Activated naive CD4-positive, alpha-beta T cell treated with anti-CD3 and anti-CD28 coated beads, Interleukin-2, amount 10 ng/mL, durations not matched to agents 7 days and 5 days (primary cell): ENCODE measurements at regions of chr1 and their contacts with region 1.

Region 1: GRCh38 chr1:151837208-151837596 is 2.4 kb downstream of the C2CD4D start:
- DNase-seq: peak; percentile 39
- H3K4me3 Mint-ChIP-seq: peak overlapping the region; percentile 72
- H3K27ac Mint-ChIP-seq: peak overlapping the region; percentile 90
- H3K4me1 Mint-ChIP-seq: peaks cover 70% of the 10 kb centered on the region
- H3K27me3 Mint-ChIP-seq: peaks cover 38% of the 10 kb centered on the region

Region 2: GRCh38 chr1:151534665-151535278 is 302.4 kb before region 1 on chr1:
- CTCF ChIA-PET with region 1: interaction called, 12 read pairs
- DNase-seq: peak; percentile 85
- H3K4me3 Mint-ChIP-seq: no peak overlapping the region
- H3K27ac Mint-ChIP-seq: no peak overlapping the region
- H3K4me1 Mint-ChIP-seq: peaks cover 5% of the 10 kb centered on the region
- H3K27me3 Mint-ChIP-seq: peaks cover 16% of the 10 kb centered on the region

Region 3: GRCh38 chr1:151594143-151594625 is 243.0 kb before region 1 on chr1:
- CTCF ChIA-PET with region 1: interaction called, 14 read pairs
- DNase-seq: peak; percentile 92
- H3K4me3 Mint-ChIP-seq: peak overlapping the region; percentile 22
- H3K27ac Mint-ChIP-seq: no peak overlapping the region
- H3K4me1 Mint-ChIP-seq: peaks cover 11% of the 10 kb centered on the region
- H3K27me3 Mint-ChIP-seq: peaks cover 12% of the 10 kb centered on the region

Region 4: DNA sequence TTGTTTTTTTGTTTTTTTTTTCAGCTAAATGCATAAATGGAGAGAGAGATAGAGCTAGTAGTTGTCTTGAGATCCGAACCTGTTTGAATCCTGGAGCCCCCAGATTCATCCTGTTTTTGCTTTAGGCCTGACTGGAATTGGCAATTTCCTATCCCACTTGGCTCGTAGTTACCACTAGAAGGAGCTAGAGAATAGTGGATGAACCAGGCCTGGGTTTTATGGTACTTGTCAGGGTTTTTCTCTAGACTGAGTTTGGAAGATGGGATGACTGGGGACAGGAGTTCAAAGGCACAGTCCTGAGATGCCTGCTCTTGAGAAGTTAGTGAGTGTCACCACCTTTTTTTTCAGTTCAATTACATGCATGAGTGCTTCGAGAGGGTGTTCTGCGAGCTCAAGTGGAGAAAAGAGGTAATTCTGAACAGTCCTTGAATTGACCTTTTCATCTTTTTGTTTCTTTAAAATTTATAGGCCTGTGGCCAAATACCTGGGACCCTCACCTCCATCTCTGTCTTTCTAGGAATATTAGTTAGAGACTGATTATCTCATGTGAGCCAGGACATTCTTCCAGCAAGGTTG is 144.0 kb before region 1 on chr1:
- CTCF ChIA-PET with region 1: interaction called, 10 read pairs
- DNase-seq: no peak
- H3K4me3 Mint-ChIP-seq: no peak overlapping the region
- H3K27ac Mint-ChIP-seq: no peak overlapping the region
- H3K4me1 Mint-ChIP-seq: peaks cover 6% of the 10 kb centered on the region
- H3K27me3 Mint-ChIP-seq: no peaks in the 10 kb centered on the region

Region 5: GRCh38 chr1:151867321-151867720 is 30.1 kb after region 1 on chr1:
- CTCF ChIA-PET with region 1: no interaction called
- DNase-seq: no peak
- H3K4me3 Mint-ChIP-seq: no peak overlapping the region
- H3K27ac Mint-ChIP-seq: no peak overlapping the region
- H3K4me1 Mint-ChIP-seq: no peaks in the 10 kb centered on the region
- H3K27me3 Mint-ChIP-seq: peaks cover 21% of the 10 kb centered on the region

Region 6: GRCh38 chr1:151888972-151889570 is 51.9 kb after region 1 on chr1:
- CTCF ChIA-PET with region 1: no interaction called
- DNase-seq: no peak
- H3K4me3 Mint-ChIP-seq: no peak overlapping the region
- H3K27ac Mint-ChIP-seq: no peak overlapping the region
- H3K4me1 Mint-ChIP-seq: peaks cover 14% of the 10 kb centered on the region
- H3K27me3 Mint-ChIP-seq: no peaks in the 10 kb centered on the region